OCI-LY7 (cell line): ENCODE measurements at regions of chr3 and their contacts with region 1.

Region 1: GRCh38 chr3:62665598-62666437 is 209.4 kb downstream of the CADPS start:
- DNase-seq: peak; percentile 90
- H3K4me3 ChIP-seq: peak overlapping the region; percentile 21
- H3K27ac ChIP-seq: peak overlapping the region; percentile 47
- H3K4me1 ChIP-seq: peaks cover 50% of the 10 kb centered on the region
- CTCF ChIP-seq: peak; percentile 97

Region 2: DNA sequence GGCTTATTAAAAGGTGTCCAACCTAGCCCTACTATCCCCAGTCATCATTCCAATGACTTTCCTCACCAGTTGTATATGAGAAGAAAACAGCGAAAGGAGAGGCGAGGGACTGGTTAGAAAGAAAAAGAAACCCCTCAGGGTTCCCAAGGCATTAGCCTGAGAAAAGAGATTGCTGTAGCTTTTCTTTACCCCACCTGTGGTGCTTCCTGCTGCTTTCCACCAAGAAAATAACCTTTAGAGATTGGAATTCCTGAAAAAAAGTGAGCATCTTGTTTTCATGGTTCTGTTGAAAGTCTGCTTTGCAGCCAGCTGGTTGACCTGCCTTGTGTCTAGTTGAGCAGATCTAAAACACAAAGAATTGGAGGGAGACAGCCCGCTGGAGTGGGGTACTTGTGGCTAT is 13.0 kb after region 1 on chr3:
- CTCF ChIA-PET with region 1: no interaction called
- POLR2A ChIA-PET with region 1: interaction called, 18 read pairs
- intact Hi-C with region 1: no loop called
- DNase-seq: no peak
- H3K4me3 ChIP-seq: no peak overlapping the region
- H3K27ac ChIP-seq: no peak overlapping the region
- H3K4me1 ChIP-seq: peaks cover 6% of the 10 kb centered on the region
- CTCF ChIP-seq: no peak

Region 3: GRCh38 chr3:62755320-62755719 is 89.5 kb after region 1 on chr3:
- CTCF ChIA-PET with region 1: no interaction called
- POLR2A ChIA-PET with region 1: interaction called, 17 read pairs
- intact Hi-C with region 1: loop called (anchors 2 kb)
- DNase-seq: peak; percentile 94
- H3K4me3 ChIP-seq: peak overlapping the region; percentile 39
- H3K27ac ChIP-seq: peak overlapping the region; percentile 87
- H3K4me1 ChIP-seq: peaks cover 47% of the 10 kb centered on the region
- CTCF ChIP-seq: no peak

Region 4: GRCh38 chr3:62803276-62803675 is 137.5 kb after region 1 on chr3:
- CTCF ChIA-PET with region 1: interaction called, 17 read pairs
- POLR2A ChIA-PET with region 1: interaction called, 142 read pairs
- intact Hi-C with region 1: loop called (anchors 1 kb)
- DNase-seq: peak; percentile 80
- H3K4me3 ChIP-seq: no peak overlapping the region
- H3K27ac ChIP-seq: peak overlapping the region; percentile 75
- H3K4me1 ChIP-seq: peaks cover 95% of the 10 kb centered on the region
- CTCF ChIP-seq: peak; percentile 82

Region 5: GRCh38 chr3:62823461-62824050 is 157.7 kb after region 1 on chr3:
- CTCF ChIA-PET with region 1: interaction called, 4 read pairs
- POLR2A ChIA-PET with region 1: interaction called, 14 read pairs
- intact Hi-C with region 1: loop called (anchors 5 kb)
- DNase-seq: peak; percentile 84
- H3K4me3 ChIP-seq: peak overlapping the region; percentile 65
- H3K27ac ChIP-seq: peak overlapping the region; percentile 85
- H3K4me1 ChIP-seq: peaks cover 96% of the 10 kb centered on the region
- CTCF ChIP-seq: no peak

Region 6: DNA sequence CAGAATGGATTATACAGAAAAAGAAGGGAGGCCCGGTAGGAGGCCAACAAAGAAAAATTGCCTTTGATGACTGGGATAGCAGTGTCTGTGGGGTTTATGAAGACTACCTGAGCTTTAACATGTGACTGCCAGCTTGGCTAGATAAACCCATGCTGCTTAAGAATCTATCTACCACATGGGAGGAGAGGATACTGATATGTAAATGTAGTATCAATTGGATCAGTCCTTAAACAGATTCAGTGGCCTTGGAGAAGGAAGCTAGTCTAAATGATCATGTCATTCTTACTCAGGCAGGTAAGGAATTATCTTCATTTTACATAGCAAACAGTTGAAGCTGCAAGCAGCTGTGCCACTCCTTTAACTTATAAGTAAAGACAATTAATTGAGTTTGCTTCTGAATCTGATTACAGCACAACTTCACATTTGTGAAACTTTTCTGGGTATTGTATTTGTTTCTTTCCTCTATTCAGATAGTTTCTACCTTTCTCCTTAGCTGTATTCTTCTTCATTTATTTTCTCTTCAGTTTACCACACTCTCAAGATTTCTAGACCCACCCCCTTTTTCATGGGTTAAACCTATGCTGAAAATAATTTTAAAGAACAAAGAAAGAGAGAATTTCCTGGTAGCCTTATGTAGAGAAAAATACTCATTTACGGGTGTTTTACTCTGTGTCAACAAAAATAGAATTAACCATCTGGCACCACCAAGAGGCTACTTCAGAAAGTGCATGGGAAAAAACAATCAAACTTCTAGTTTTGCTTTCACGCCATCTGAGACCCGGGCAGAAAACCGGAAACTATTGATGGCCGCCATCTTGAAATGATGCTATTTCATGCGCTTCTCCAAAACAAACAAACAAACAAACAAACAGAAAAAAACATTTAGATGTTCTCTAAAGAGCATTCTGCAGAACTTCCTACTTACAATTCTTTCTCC is 562.5 kb after region 1 on chr3:
- CTCF ChIA-PET with region 1: interaction called, 3 read pairs
- POLR2A ChIA-PET with region 1: interaction called, 9 read pairs
- intact Hi-C with region 1: loop called (anchors 1 kb)
- DNase-seq: peak; percentile 73
- H3K4me3 ChIP-seq: no peak overlapping the region
- H3K27ac ChIP-seq: no peak overlapping the region
- H3K4me1 ChIP-seq: peaks cover 4% of the 10 kb centered on the region
- CTCF ChIP-seq: peak; percentile 85